MCF 10A (cell line): ENCODE measurements at regions of chr5 and their contacts with region 1.

Region 1: DNA sequence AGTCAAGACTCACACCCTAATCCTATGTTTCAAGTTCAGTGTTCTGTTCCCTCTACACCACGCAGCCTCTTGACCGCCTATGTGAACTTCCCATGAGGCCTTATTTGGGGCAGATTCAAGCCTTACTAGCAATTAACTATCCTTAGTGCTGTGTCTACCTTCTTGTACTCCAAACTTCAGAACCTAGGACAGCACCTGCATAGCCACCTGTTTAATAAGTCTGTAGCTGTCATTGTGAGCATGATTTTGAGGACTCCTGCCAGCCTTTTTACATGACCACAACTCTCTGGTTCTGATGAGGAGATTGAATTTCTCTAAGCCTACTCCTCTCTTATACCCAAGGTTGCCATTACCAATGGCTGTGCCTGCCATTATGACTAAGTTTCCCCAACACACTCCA is 50.8 kb upstream of the PCSK1 start:
- DNase-seq: peak; percentile 75
- H3K4me3 Mint-ChIP-seq: no peak overlapping the region
- H3K27ac Mint-ChIP-seq: no peak overlapping the region
- H3K4me1 Mint-ChIP-seq: no peaks in the 10 kb centered on the region
- H3K27me3 Mint-ChIP-seq: no peaks in the 10 kb centered on the region
- CTCF ChIP-seq: no peak

Region 2: DNA sequence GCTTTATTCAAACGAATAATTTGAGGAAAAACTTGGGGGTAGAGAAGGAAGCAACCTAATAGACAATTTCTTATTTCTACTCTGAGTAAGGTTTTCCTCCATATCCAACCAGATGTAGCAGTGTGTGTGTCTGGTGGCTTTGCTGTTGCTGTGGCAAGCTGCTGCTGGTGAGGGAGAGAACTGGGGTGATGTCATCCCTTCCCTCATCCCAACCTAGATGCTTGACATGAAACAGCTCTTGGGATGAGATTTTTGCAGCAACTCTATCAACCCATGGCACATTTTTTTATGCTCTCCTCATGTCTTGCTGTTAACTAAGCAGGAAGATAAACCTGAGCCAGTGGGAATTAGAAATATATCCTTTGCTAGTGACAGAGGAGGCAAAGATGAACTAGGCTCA is 186.6 kb before region 1 on chr5:
- CTCF ChIA-PET with region 1: no interaction called
- POLR2A ChIA-PET with region 1: no interaction called
- intact Hi-C with region 1: no loop called
- DNase-seq: peak; percentile 27
- H3K4me3 Mint-ChIP-seq: no peak overlapping the region
- H3K27ac Mint-ChIP-seq: peak overlapping the region; percentile 93
- H3K4me1 Mint-ChIP-seq: peaks cover 33% of the 10 kb centered on the region
- H3K27me3 Mint-ChIP-seq: no peaks in the 10 kb centered on the region
- CTCF ChIP-seq: no peak

Region 3: DNA sequence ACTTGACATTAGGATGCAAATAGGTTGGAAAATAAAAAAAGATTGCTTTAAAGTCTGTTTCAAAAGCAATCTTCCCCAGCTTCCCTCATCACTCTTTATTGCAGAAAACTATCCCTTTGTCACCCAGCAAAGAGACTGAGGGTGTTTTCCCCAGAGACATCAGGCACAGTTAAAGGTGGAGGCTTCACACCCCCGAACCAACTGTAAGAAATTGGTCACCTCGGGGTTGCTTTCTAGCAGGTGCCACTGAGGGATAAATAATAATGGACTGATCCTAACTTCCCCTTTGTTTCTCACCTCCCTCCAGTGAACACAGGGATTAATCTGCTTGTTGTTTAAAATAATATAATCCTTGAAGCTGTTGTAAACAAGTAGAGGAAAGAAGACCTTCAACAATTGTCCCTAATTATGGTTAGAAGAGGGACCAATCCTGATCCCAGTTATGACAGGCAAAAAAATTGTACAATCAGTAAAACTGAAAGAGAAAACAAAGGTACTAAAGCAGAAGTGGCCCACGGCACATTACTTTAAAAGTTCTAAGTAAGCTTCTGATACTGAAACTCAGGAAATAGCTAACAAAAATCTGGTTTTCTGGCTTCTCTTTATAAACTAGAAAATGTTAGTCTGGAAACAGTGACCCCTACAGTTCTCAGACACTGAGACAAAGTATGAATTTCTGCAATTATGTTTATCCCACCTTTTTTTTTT is 44.2 kb before region 1 on chr5:
- CTCF ChIA-PET with region 1: interaction called, 4 read pairs
- POLR2A ChIA-PET with region 1: no interaction called
- intact Hi-C with region 1: loop called (anchors 5 kb)
- DNase-seq: no peak
- H3K4me3 Mint-ChIP-seq: no peak overlapping the region
- H3K27ac Mint-ChIP-seq: no peak overlapping the region
- H3K4me1 Mint-ChIP-seq: peaks cover 5% of the 10 kb centered on the region
- H3K27me3 Mint-ChIP-seq: peaks cover 64% of the 10 kb centered on the region
- CTCF ChIP-seq: no peak

Region 4: GRCh38 chr5:96503501-96504236 is 19.8 kb after region 1 on chr5:
- CTCF ChIA-PET with region 1: no interaction called
- POLR2A ChIA-PET with region 1: no interaction called
- intact Hi-C with region 1: no loop called
- DNase-seq: no peak
- H3K4me3 Mint-ChIP-seq: no peak overlapping the region
- H3K27ac Mint-ChIP-seq: no peak overlapping the region
- H3K4me1 Mint-ChIP-seq: peaks cover 15% of the 10 kb centered on the region
- H3K27me3 Mint-ChIP-seq: no peaks in the 10 kb centered on the region
- CTCF ChIP-seq: no peak

Region 5: GRCh38 chr5:96648023-96648422 is 164.1 kb after region 1 on chr5:
- CTCF ChIA-PET with region 1: no interaction called
- POLR2A ChIA-PET with region 1: no interaction called
- intact Hi-C with region 1: no loop called
- DNase-seq: no peak
- H3K4me3 Mint-ChIP-seq: no peak overlapping the region
- H3K27ac Mint-ChIP-seq: no peak overlapping the region
- H3K4me1 Mint-ChIP-seq: peaks cover 16% of the 10 kb centered on the region
- H3K27me3 Mint-ChIP-seq: no peaks in the 10 kb centered on the region
- CTCF ChIP-seq: no peak